Activated CD8-positive, alpha-beta T cell treated with anti-CD3 and anti-CD28 coated beads for 36 hours (primary cell): ENCODE measurements at regions of chr19 and their contacts with region 1.

Region 1: DNA sequence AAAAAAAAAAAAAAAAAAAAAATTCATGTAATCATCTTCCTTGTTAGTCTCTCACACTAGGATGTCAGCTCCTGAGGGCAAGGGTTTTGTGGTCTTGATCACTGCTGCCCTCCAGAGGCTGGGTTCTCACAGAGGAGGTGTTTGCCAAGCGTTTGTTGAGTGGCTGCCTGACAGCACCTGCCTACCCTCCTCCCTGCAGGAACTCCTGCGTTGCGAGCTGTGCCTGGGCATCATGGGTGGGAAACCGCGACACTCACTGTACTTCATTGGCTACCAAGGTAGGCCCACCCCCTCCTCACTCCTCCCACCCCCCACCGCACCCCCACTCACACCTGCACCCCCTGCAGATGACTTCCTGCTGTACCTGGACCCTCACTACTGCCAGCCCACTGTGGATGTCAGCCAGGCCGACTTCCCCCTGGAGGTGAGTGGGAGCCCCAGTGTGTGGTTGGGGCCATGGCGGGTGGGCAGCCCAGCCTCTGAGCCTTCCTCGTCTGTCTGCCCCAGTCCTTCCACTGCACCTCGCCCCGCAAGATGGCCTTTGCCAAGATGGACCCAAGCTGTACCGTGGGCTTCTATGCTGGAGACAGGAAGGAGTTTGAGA is 8.1 kb downstream of the ATG4D start:
- DNase-seq: peak; percentile 73
- ATAC-seq: peak; percentile 14
- H3K4me3 Mint-ChIP-seq: no peak overlapping the region
- H3K27ac Mint-ChIP-seq: peak overlapping the region; percentile 92
- H3K4me1 Mint-ChIP-seq: peaks cover 54% of the 10 kb centered on the region
- H3K27me3 Mint-ChIP-seq: no peaks in the 10 kb centered on the region
- CTCF ChIP-seq: no peak

Region 2: GRCh38 chr19:10478903-10479384 is 72.9 kb before region 1 on chr19:
- CTCF ChIA-PET with region 1: interaction called, 21 read pairs
- POLR2A ChIA-PET with region 1: interaction called, 3 read pairs
- intact Hi-C with region 1: no loop called
- DNase-seq: peak; percentile 95
- ATAC-seq: peak; percentile 97
- H3K4me3 Mint-ChIP-seq: peak overlapping the region; percentile 44
- H3K27ac Mint-ChIP-seq: no peak overlapping the region
- H3K4me1 Mint-ChIP-seq: peaks cover 9% of the 10 kb centered on the region
- H3K27me3 Mint-ChIP-seq: no peaks in the 10 kb centered on the region
- CTCF ChIP-seq: peak; percentile 92

Region 3: DNA sequence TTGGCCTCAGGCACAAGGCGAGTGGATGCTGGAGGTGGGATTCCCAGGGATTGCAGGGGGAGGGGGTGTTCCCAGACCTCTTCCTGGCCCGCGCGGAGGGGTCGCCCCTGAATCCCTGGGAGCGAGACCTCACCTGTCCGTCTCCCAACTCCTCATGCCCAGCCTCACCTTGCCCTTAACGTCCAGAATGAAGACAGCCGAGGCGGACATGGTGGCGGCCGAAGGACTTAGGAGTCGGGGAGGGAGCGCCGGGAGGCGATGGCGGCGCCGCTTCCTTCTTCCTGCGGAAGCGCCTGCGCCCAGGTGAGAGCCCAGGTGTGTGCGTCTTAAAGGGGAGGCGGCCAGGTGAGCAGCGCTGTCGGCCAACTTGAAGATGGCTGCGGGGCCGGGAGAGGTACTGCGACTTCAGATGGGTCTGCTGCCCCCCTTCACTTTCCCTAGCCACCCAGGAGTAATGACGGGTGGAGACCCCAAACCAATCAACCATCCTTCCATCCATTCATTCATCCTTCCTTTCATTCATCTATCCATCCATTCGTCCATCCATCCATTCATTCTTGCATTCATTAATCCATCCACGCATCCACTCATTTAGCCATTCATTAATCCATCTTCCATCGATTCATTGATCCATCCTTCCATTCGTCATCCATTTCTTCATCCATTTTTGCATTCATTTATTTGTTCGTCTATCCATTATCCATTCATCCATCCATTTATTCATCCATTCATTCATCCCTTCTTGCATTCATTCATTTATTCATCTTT is 35.4 kb after region 1 on chr19 and contains the start of gene AP1M2:
- CTCF ChIA-PET with region 1: no interaction called
- POLR2A ChIA-PET with region 1: no interaction called
- intact Hi-C with region 1: no loop called
- DNase-seq: no peak
- ATAC-seq: no peak
- H3K4me3 Mint-ChIP-seq: no peak within 1 kb of the TSS
- H3K27ac Mint-ChIP-seq: no peak within 1 kb of the TSS
- H3K4me1 Mint-ChIP-seq: peaks cover 6% of the 10 kb centered on the region
- H3K27me3 Mint-ChIP-seq: peaks cover 6% of the 10 kb centered on the region
- CTCF ChIP-seq: no peak
- total RNA-seq, gene AP1M2: not detected

Region 4: GRCh38 chr19:10701955-10702525 is 150.2 kb after region 1 on chr19:
- CTCF ChIA-PET with region 1: interaction called, 18 read pairs
- POLR2A ChIA-PET with region 1: interaction called, 10 read pairs
- intact Hi-C with region 1: no loop called
- DNase-seq: peak; percentile 57
- ATAC-seq: peak; percentile 56
- H3K4me3 Mint-ChIP-seq: peak overlapping the region; percentile 93
- H3K27ac Mint-ChIP-seq: peak overlapping the region; percentile 88
- H3K4me1 Mint-ChIP-seq: peaks cover 8% of the 10 kb centered on the region
- H3K27me3 Mint-ChIP-seq: peaks cover 2% of the 10 kb centered on the region
- CTCF ChIP-seq: no peak